Right lobe of liver (tissue), 6 donors: ENCODE measurements at regions of chr3 and their contacts with region 1.

Region 1: GRCh38 chr3:12135029-12135657 is 23.6 kb downstream of the TIMP4 start:
- DNase-seq: peak; percentile 74 to 81 (median 76)
- ATAC-seq: peak; percentile 96 to 98 (median 96)
- H3K4me3 ChIP-seq: no peak overlapping the region
- H3K27ac ChIP-seq: no peak overlapping the region
- H3K4me1 ChIP-seq: no peaks in the 10 kb centered on the region
- H3K27me3 ChIP-seq: no peaks in the 10 kb centered on the region
- CTCF ChIP-seq: peak; percentile 88 to 94 (median 91)
- POLR2A ChIP-seq: no peak

Region 2: GRCh38 chr3:11898611-11899325 is 236.4 kb before region 1 on chr3:
- intact Hi-C with region 1: no loop called
- DNase-seq: no peak
- ATAC-seq: peak in 1 of 4 donors; percentile 16
- H3K4me3 ChIP-seq: no peak overlapping the region
- H3K27ac ChIP-seq: no peak overlapping the region
- H3K4me1 ChIP-seq: no peaks in the 10 kb centered on the region
- H3K27me3 ChIP-seq: no peaks in the 10 kb centered on the region
- CTCF ChIP-seq: no peak
- POLR2A ChIP-seq: no peak

Region 3: DNA sequence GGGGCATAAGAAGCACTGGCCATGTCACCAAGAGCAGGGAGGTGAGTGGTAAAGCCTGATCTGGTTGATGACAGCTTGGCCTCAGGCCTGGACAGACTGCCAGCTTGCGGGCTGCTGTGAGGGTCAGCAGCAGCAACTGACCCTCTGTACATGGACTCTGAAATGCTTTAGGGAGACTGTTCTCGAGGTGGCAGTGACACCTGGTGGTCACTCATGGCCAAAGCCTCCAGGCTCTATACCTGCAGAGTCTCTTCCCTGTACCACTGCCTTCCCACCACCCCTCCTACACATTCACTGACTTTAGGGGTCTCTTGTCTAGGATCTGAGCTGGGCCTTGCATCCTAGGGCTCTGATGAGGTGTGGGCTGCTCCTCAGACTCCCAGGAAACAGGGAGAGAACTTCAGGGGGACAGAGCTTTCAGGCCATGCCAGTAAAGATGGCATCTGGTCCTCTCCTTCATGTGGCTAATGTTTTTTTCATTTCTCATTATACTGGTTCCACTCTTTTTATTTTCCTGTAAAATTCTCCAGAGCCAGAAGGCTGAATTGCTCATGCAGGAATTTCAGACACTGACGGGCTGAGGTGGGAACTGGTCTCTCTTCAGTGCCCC is 40.8 kb after region 1 on chr3:
- intact Hi-C with region 1: loop called in 1 of 2 experiments (anchors 5 kb)
- DNase-seq: peak; percentile 56 to 71 (median 69)
- ATAC-seq: peak; percentile 92 to 94 (median 93)
- H3K4me3 ChIP-seq: no peak overlapping the region
- H3K27ac ChIP-seq: no peak overlapping the region
- H3K4me1 ChIP-seq: no peaks in the 10 kb centered on the region
- H3K27me3 ChIP-seq: no peaks in the 10 kb centered on the region
- CTCF ChIP-seq: peak; percentile 85 to 94 (median 88)
- POLR2A ChIP-seq: no peak

Region 4: DNA sequence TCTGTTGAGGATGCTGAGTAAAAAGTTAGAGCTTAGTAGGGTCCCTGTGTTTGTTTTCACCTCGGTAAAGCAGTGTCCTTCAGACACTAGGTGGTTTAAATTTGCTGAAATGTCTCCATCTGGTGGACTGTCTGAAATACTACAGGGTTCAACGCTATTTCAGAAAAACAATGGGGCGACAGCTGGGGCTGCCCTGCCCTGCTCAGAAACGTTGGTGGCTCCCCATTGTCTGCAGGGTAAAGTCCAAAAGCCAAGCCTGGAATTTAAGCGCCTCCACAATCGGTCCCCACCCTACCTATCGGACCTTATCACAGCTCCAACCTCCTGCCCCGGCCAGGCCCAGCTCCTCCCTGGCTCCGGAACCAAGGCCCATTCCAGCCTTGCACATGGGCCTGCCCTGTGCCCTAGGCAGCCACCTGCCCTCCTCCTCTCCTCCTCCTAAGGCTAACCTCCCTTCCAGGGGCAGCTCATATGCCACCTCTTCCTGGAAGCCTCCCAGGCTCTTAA is 344.8 kb after region 1 on chr3:
- intact Hi-C with region 1: loop called (anchors 5 to 10 kb)
- DNase-seq: peak in 1 of 3 donors; percentile 27
- ATAC-seq: peak; percentile 60 to 66 (median 62)
- H3K4me3 ChIP-seq: no peak overlapping the region
- H3K27ac ChIP-seq: no peak overlapping the region
- H3K4me1 ChIP-seq: peaks cover 0 to 25% (median 4%) of the 10 kb centered on the region in 4 donors
- H3K27me3 ChIP-seq: no peaks in the 10 kb centered on the region
- CTCF ChIP-seq: peak; percentile 56 to 89 (median 76)
- POLR2A ChIP-seq: no peak